ENCODE measurements at regions of chr1 and their contacts with region 1.

Region 1: DNA sequence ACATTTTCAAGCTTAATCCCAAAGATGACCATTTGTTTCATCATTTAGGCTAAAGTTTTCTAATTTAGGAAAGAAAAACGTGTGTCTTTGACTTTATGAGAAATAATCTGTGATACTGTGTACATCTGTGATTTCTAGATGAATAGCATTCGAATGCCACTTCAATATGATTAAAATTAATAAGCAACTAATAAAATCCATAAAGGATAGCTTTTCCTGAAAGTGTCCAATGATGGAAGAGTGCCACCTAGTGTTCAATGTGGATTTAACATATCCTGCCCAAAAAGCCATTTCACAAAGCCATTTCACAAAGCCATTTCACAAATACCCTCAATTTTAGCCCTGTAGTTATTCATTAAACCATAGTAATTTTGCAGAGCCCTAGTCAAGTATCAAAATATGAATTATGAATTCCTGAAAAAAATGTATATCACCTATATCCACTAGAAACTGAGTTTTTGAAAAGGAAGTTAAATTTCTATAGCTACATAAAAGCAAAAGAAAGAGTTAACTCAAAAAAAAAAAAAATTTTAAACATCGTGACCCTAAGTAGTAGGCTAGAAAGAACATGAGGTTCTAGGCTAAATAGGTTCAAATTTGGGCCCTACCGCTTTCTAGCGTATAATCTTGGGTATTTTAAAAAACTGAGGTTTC is 19.1 kb downstream of the NME7 start:
- DNase-seq: peak; percentile 68
- ATAC-seq: no peak
- H3K4me3 ChIP-seq: no peak overlapping the region
- H3K4me3 Mint-ChIP-seq: no peak overlapping the region
- H3K27ac ChIP-seq: no peak overlapping the region
- H3K27ac Mint-ChIP-seq: no peak overlapping the region
- H3K4me1 ChIP-seq: no peaks in the 10 kb centered on the region
- H3K4me1 Mint-ChIP-seq: no peaks in the 10 kb centered on the region
- H3K27me3 ChIP-seq: no peaks in the 10 kb centered on the region
- H3K27me3 Mint-ChIP-seq: no peaks in the 10 kb centered on the region
- CTCF ChIP-seq: peak; percentile 90

Region 2: GRCh38 chr1:168603501-168604110 is 744.9 kb before region 1 on chr1:
- CTCF ChIA-PET with region 1: interaction called, 102 read pairs
- POLR2A ChIA-PET with region 1: no interaction called
- intact Hi-C with region 1: no loop called
- DNase-seq: peak; percentile 55
- ATAC-seq: peak; percentile 39
- H3K4me3 ChIP-seq: no peak overlapping the region
- H3K4me3 Mint-ChIP-seq: no peak overlapping the region
- H3K27ac ChIP-seq: no peak overlapping the region
- H3K27ac Mint-ChIP-seq: no peak overlapping the region
- H3K4me1 ChIP-seq: no peaks in the 10 kb centered on the region
- H3K4me1 Mint-ChIP-seq: no peaks in the 10 kb centered on the region
- H3K27me3 ChIP-seq: no peaks in the 10 kb centered on the region
- H3K27me3 Mint-ChIP-seq: peaks cover 28% of the 10 kb centered on the region
- CTCF ChIP-seq: peak; percentile 68

Region 3: GRCh38 chr1:169360415-169360814 is 11.9 kb after region 1 on chr1:
- CTCF ChIA-PET with region 1: interaction called, 12 read pairs
- POLR2A ChIA-PET with region 1: no interaction called
- intact Hi-C with region 1: no loop called
- DNase-seq: no peak
- ATAC-seq: no peak
- H3K4me3 ChIP-seq: no peak overlapping the region
- H3K4me3 Mint-ChIP-seq: no peak overlapping the region
- H3K27ac ChIP-seq: no peak overlapping the region
- H3K27ac Mint-ChIP-seq: no peak overlapping the region
- H3K4me1 ChIP-seq: no peaks in the 10 kb centered on the region
- H3K4me1 Mint-ChIP-seq: peaks cover 4% of the 10 kb centered on the region
- H3K27me3 ChIP-seq: no peaks in the 10 kb centered on the region
- H3K27me3 Mint-ChIP-seq: no peaks in the 10 kb centered on the region
- CTCF ChIP-seq: no peak

Measured in B cell (primary cell).